Heart right ventricle (tissue), 16 donors: ENCODE measurements at regions of chr7 and their contacts with region 1.

Region 1: GRCh38 chr7:32298408-32299132 is 191.6 kb downstream of the LSM5 start:
- DNase-seq: peak; percentile 17 to 39
- ATAC-seq: peak; percentile 55 to 76 (median 66)
- H3K4me3 ChIP-seq: peak overlapping the region; percentile 21 to 68 (median 59)
- H3K27ac ChIP-seq: peak overlapping the region; percentile 13 to 84 (median 70)
- H3K4me1 ChIP-seq: peaks cover 0 to 23% (median 9%) of the 10 kb centered on the region in 9 donors
- H3K27me3 ChIP-seq: peaks cover 0 to 63% (median 40%) of the 10 kb centered on the region in 7 donors
- CTCF ChIP-seq: peak in 1 of 9 donors; percentile 6

Region 2: DNA sequence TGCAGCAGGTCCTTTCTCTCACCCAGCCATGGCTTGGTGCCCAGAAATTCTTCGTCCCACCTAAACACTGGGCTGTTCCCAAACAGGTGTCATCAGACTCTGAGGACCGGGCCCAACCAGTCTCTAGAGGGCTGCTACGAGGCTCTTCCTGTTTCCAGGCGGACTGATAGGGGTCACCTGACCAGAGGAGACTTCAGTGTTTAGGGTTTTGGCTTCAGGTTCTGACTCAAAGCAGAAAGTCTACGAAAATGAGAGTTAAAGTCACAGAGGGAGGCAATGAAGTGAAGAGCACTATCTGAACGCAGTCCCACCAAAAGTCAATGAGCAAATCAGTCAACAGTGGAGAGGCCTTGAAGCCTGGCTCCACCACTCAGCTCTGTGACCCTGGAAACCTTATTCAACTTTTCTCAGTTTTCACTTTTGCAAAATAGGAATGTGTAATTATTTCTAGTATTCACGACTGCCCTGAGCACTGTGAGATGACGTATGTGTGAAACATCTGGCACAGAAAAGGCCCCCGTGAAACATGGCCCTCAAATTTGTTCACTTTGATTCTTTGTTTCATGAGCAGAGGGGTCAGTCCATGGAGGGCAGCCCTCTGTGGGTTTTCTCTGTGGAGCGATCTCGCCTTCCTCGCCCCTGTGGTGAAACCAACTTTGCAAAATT is 38.5 kb before region 1 on chr7:
- intact Hi-C with region 1: loop called in 1 of 10 experiments (anchors 5 kb)
- DNase-seq: no peak
- ATAC-seq: peak in 1 of 8 donors; percentile 26
- H3K4me3 ChIP-seq: no peak overlapping the region
- H3K27ac ChIP-seq: no peak overlapping the region
- H3K4me1 ChIP-seq: peaks cover 0 to 32% (median 5%) of the 10 kb centered on the region in 9 donors
- H3K27me3 ChIP-seq: peaks cover 0 to 6% (median 0%) of the 10 kb centered on the region in 7 donors
- CTCF ChIP-seq: no peak

Region 3: DNA sequence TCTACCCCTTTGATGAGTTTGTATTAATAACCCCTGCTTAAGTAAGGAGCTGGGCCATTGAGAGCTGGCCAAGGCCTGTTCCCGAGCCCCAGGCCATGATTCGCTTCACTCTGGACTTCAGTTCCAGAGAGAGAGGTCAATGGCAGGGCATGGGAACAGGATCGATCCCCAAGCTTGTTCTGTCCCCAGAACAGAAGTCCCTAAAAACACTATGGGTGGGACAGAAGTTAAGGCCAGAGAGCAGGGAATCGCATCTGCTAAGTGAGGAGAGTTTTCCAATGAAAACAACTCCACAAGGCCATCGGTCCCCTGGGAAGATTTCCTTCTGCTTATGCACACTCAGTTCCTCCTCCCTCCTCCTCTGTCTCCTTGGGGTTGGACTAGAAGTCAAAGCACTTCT is 32.0 kb after region 1 on chr7:
- intact Hi-C with region 1: loop called in 1 of 10 experiments (anchors 1 kb)
- DNase-seq: peak; percentile 39 to 72
- ATAC-seq: peak; percentile 53 to 87 (median 79)
- H3K4me3 ChIP-seq: no peak overlapping the region
- H3K27ac ChIP-seq: peak overlapping the region in 2 of 10 donors; percentile 23 to 30
- H3K4me1 ChIP-seq: no peaks in the 10 kb centered on the region
- H3K27me3 ChIP-seq: peaks cover 0 to 11% (median 0%) of the 10 kb centered on the region in 7 donors
- CTCF ChIP-seq: no peak